Activated T-helper 1 cell treated with anti-CD3 and anti-CD28 coated beads, Interleukin-12 subunit alpha, Interleukin-12 subunit beta, Interleukin-2, Interleukin-4 antibody, amounts not matched to agents 30 ng/mL and 10 ng/mL and 1 ng/mL, durations not matched to agents 14 hours and 24 hours and 36 hours (primary cell): ENCODE measurements at regions of chr4 and their contacts with region 1.

Region 1: GRCh38 chr4:178415925-178416324 is 973.7 kb upstream of the AGA start:
- DNase-seq: no peak
- H3K4me3 Mint-ChIP-seq: no peak overlapping the region
- H3K27ac Mint-ChIP-seq: no peak overlapping the region
- H3K4me1 Mint-ChIP-seq: no peaks in the 10 kb centered on the region
- H3K27me3 Mint-ChIP-seq: no peaks in the 10 kb centered on the region

Region 2: GRCh38 chr4:177986236-177986635 is 429.7 kb before region 1 on chr4:
- intact Hi-C with region 1: no loop called
- DNase-seq: no peak
- H3K4me3 Mint-ChIP-seq: no peak overlapping the region
- H3K27ac Mint-ChIP-seq: no peak overlapping the region
- H3K4me1 Mint-ChIP-seq: no peaks in the 10 kb centered on the region
- H3K27me3 Mint-ChIP-seq: no peaks in the 10 kb centered on the region

Region 3: DNA sequence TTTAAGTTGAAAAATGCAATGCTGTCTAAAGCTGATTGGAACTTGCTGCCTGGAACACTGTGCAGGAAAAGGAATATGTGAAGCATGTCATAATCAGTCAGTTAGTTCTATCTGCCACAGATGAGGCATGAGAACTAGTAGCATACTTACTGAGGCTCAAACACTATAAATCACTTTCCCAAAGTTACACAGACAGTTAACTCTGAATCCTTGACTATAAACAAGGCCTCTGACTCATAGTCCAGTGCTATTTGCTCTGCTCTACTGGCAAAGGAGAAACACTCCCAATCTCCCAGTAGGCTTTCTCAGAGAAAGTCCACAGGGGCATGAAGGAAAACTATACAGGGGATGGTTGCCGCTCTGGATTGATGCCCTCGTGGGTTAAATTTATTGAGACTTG is 1748.9 kb after region 1 on chr4:
- intact Hi-C with region 1: loop called (anchors 5 kb)
- DNase-seq: no peak
- H3K4me3 Mint-ChIP-seq: no peak overlapping the region
- H3K27ac Mint-ChIP-seq: no peak overlapping the region
- H3K4me1 Mint-ChIP-seq: no peaks in the 10 kb centered on the region
- H3K27me3 Mint-ChIP-seq: no peaks in the 10 kb centered on the region